Activated naive CD4-positive, alpha-beta T cell treated with anti-CD3 and anti-CD28 coated beads for 36 hours (primary cell): ENCODE measurements at regions of chr2 and their contacts with region 1.

Region 1: DNA sequence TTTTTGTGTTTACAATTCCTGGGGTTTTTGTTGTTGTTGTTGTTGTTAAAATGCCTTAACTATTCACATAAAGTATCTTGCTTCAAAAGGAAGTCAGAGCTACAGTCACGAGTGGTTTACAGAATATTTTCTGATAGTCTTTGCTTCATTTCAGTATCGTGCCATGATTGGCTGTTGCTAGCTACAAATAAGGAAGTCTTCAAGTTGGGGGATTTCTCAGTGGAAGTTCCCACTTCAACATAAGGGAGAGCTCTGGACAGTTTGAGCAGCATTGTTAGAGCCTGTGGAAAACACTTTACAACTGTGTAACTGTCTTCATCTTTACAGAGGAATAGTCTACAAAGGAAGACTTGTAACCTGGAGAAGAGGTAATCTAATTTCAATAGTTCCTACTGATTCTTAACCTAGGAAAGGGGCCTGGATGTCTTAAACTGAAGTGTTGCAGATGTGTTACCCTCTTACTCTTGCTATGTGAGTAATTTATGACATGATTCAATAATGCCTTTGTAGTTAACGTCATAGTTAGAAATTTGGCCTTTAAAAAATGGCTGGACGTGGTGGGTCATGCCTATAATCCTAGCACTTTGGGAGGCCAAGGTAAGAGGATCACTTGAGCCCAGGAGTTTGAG is 23.4 kb upstream of the TANK start:
- DNase-seq: peak; percentile 48
- H3K4me3 Mint-ChIP-seq: peak overlapping the region; percentile 88
- H3K27ac Mint-ChIP-seq: peak overlapping the region; percentile 98
- H3K4me1 Mint-ChIP-seq: peaks cover 49% of the 10 kb centered on the region
- H3K27me3 Mint-ChIP-seq: no peaks in the 10 kb centered on the region

Region 2: DNA sequence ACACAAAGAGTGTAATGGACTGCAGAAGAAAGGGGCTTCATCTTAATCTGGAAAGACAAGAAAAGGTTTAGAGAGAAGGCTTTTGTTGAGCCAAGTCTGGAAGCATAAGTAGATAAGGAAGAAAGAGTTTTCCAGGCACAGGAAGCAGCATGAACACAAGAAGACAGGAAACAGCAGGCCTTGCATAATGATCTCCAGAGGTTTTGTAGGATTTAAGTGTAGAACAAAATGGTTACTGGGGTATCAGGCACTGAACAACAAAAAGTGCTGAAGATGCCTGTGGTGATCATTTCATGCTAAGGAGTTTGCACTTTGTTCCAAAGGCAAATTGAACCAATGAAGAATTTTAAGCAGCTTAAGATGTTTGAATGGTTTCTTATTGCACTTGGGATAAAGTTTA is 258.2 kb before region 1 on chr2:
- CTCF ChIA-PET with region 1: no interaction called
- intact Hi-C with region 1: no loop called
- DNase-seq: no peak
- H3K4me3 Mint-ChIP-seq: no peak overlapping the region
- H3K27ac Mint-ChIP-seq: no peak overlapping the region
- H3K4me1 Mint-ChIP-seq: no peaks in the 10 kb centered on the region
- H3K27me3 Mint-ChIP-seq: no peaks in the 10 kb centered on the region

Region 3: DNA sequence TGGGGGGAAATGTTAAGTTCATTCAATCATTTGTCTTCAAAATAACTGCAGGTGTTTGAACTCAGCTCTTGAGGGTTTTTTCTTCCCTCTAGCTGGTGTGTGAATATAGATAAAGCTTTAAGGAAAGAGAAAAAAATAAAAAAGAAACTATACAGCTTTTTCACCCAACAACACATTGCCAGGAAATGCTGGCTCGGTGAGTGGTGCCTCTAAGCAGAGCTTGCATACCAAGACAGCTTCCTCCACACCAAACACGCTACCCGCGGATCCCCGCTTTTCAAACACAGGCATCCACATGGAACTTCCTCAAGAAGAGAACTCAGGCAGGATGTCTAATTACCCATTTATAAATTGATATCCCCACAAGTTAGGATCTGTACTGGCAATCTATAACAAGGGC is 46.4 kb before region 1 on chr2:
- CTCF ChIA-PET with region 1: no interaction called
- intact Hi-C with region 1: loop called (anchors 1 kb)
- DNase-seq: peak; percentile 74
- H3K4me3 Mint-ChIP-seq: no peak overlapping the region
- H3K27ac Mint-ChIP-seq: peak overlapping the region; percentile 68
- H3K4me1 Mint-ChIP-seq: peaks cover 33% of the 10 kb centered on the region
- H3K27me3 Mint-ChIP-seq: no peaks in the 10 kb centered on the region

Region 4: GRCh38 chr2:161122772-161123530 is 13.9 kb before region 1 on chr2:
- CTCF ChIA-PET with region 1: interaction called, 10 read pairs
- intact Hi-C with region 1: loop called (anchors 1 kb)
- DNase-seq: peak; percentile 70
- H3K4me3 Mint-ChIP-seq: no peak overlapping the region
- H3K27ac Mint-ChIP-seq: peak overlapping the region; percentile 3
- H3K4me1 Mint-ChIP-seq: peaks cover 20% of the 10 kb centered on the region
- H3K27me3 Mint-ChIP-seq: peaks cover 3% of the 10 kb centered on the region

Region 5: DNA sequence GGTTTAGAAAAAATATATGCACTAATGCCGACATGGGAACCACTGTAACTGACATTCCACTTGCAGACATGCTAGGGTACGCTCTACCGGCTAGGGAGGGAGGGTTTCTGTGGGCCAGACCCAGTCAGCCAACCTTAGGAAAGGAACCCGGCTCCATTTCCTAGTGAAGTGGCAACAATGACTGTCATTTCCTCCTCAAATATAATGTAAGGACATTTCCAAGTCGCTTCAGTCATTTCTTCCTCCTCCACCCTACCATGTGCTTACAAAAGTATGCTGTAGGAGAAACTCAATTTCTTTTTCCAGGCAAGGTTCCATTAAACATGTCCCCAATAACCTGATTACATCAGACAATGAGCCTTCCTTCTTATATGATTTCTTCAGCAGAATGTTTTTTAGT is 107.1 kb after region 1 on chr2:
- CTCF ChIA-PET with region 1: no interaction called
- intact Hi-C with region 1: loop called (anchors 1 kb)
- DNase-seq: peak; percentile 37
- H3K4me3 Mint-ChIP-seq: peak overlapping the region; percentile 87
- H3K27ac Mint-ChIP-seq: peak overlapping the region; percentile 95
- H3K4me1 Mint-ChIP-seq: peaks cover 50% of the 10 kb centered on the region
- H3K27me3 Mint-ChIP-seq: no peaks in the 10 kb centered on the region

Region 6: GRCh38 chr2:161766334-161766733 is 629.5 kb after region 1 on chr2:
- CTCF ChIA-PET with region 1: no interaction called
- intact Hi-C with region 1: no loop called
- DNase-seq: no peak
- H3K4me3 Mint-ChIP-seq: no peak overlapping the region
- H3K27ac Mint-ChIP-seq: no peak overlapping the region
- H3K4me1 Mint-ChIP-seq: no peaks in the 10 kb centered on the region
- H3K27me3 Mint-ChIP-seq: no peaks in the 10 kb centered on the region